ENCODE measurements at regions of chr10 and their contacts with region 1.

Region 1: GRCh38 chr10:28663576-28664313 is 13.6 kb upstream of the BAMBI start:
- DNase-seq: peak; percentile 59 to 89 (median 81)
- H3K4me3 ChIP-seq: no peak overlapping the region
- H3K27ac ChIP-seq: peak overlapping the region in 1 of 59 donors; percentile 53
- H3K27me3 ChIP-seq: peaks cover 0 to 24% (median 14%) of the 10 kb centered on the region in 45 donors
- CTCF ChIP-seq: peak; percentile 69 to 99 (median 97)

Region 2: GRCh38 chr10:28628184-28628893 is 35.4 kb before region 1 on chr10:
- intact Hi-C with region 1: loop called in 1 of 2 experiments (anchors 5 kb)
- DNase-seq: peak; percentile 66 to 86 (median 80)
- H3K4me3 ChIP-seq: peak overlapping the region in 3 of 59 donors; percentile 10 to 19 (median 19)
- H3K27ac ChIP-seq: no peak overlapping the region
- H3K27me3 ChIP-seq: peaks cover 0 to 14% (median 0%) of the 10 kb centered on the region in 45 donors
- CTCF ChIP-seq: peak; percentile 75 to 96 (median 92)

Region 3: DNA sequence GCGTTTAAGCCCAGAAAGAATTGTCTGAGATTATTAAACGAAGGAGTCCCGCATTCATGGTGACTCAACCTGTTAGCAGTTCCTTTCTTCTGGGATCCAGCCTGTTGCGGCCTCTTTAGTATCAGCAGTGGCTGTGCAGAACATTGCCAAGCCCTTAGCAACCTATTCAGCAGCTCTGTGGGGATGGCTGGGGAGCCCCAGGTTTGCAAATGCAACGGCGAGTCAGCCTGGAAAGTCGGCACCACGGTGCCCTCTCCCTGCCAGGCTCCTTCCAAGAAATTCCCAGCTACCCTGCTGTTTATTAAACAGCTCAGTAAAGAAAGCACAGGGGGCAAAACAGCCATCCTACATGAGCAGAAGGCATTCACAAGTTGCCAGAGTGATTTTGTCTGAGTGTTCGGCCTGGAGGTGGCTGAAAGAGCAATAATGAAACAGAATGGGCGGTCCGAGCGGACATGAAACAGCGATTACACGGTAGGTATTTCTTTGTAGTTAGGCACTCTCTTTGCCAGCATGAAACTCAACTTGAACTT is 211.9 kb after region 1 on chr10:
- intact Hi-C with region 1: loop called in 1 of 2 experiments (anchors 5 kb)
- DNase-seq: peak in 6 of 10 donors; percentile 20 to 55 (median 36)
- H3K4me3 ChIP-seq: peak overlapping the region in 16 of 59 donors; percentile 1 to 35 (median 16)
- H3K27ac ChIP-seq: no peak overlapping the region
- H3K27me3 ChIP-seq: peaks cover 0 to 4% (median 0%) of the 10 kb centered on the region in 45 donors
- CTCF ChIP-seq: peak in 5 of 56 donors; percentile 8 to 42 (median 21)

Region 4: GRCh38 chr10:28991326-28992270 is 327.9 kb after region 1 on chr10:
- intact Hi-C with region 1: loop called (anchors 5 to 10 kb)
- DNase-seq: no peak
- H3K4me3 ChIP-seq: no peak overlapping the region
- H3K27ac ChIP-seq: peak overlapping the region in 1 of 59 donors; percentile 35
- H3K27me3 ChIP-seq: peaks cover 0 to 3% (median 0%) of the 10 kb centered on the region in 45 donors
- CTCF ChIP-seq: peak; percentile 20 to 69 (median 50)

Region 5: DNA sequence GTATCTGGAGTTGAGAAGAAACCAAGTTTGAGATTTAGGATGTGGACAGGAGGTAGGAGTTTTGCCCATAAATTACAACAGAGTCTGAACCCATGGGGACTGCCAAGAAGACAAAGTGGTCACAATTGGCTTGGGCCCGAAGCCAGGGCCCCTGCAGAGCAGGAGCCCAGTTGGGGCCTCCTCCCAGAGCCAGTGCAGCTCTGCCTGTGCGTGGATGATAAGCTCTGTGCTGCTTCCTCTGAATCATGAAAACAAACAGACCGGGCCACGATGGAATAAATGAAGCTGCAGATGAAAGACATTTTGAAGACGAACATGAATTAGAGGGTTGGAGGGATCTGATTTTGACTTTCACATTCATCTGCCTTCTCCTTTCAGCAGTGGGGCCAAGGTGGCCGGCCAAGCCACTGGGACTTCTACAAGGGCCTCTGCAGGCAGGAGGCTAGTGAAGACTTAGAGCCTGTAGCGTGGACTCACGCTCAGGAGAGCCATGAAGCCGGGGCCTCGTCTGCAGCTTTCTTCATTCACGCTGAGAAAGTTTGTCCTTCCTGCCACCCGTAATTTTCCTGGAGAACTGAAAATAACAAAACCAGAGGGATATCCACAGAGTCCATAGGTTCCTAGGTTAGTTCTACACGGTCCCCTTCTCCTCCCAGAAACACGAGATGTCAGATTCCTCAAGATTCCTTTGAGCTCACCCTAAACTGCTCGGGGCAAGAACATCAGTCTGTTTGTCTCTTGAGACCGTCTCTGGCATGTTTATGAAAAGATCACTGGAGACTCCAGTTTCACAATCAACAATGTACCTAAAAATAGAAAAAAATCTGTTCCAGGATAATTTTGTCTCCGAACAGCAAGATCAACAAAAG is 468.4 kb after region 1 on chr10:
- intact Hi-C with region 1: loop called in 1 of 2 experiments (anchors 5 kb)
- DNase-seq: no peak
- H3K4me3 ChIP-seq: peak overlapping the region in 1 of 59 donors; percentile 1
- H3K27ac ChIP-seq: peak overlapping the region in 31 of 59 donors; percentile 4 to 80 (median 47)
- H3K27me3 ChIP-seq: peaks cover 0 to 14% (median 0%) of the 10 kb centered on the region in 45 donors
- CTCF ChIP-seq: no peak

Region 6: GRCh38 chr10:29239569-29240472 is 576.1 kb after region 1 on chr10:
- intact Hi-C with region 1: loop called in 1 of 2 experiments (anchors 5 kb)
- DNase-seq: no peak
- H3K4me3 ChIP-seq: no peak overlapping the region
- H3K27ac ChIP-seq: no peak overlapping the region
- H3K27me3 ChIP-seq: peaks cover 0 to 3% (median 0%) of the 10 kb centered on the region in 45 donors
- CTCF ChIP-seq: peak in 36 of 56 donors; percentile 7 to 63 (median 31)

Region 7: GRCh38 chr10:29386342-29386999 is 722.7 kb after region 1 on chr10:
- intact Hi-C with region 1: loop called in 1 of 2 experiments (anchors 10 kb)
- DNase-seq: no peak
- H3K4me3 ChIP-seq: peak overlapping the region in 5 of 59 donors; percentile 24 to 48 (median 33)
- H3K27ac ChIP-seq: no peak overlapping the region
- H3K27me3 ChIP-seq: peaks cover 0 to 6% (median 0%) of the 10 kb centered on the region in 45 donors
- CTCF ChIP-seq: peak; percentile 47 to 89 (median 79)

Measured in dorsolateral prefrontal cortex (tissue), 120 donors.